ENCODE measurements at regions of chr19 and their contacts with region 1.

Region 1: DNA sequence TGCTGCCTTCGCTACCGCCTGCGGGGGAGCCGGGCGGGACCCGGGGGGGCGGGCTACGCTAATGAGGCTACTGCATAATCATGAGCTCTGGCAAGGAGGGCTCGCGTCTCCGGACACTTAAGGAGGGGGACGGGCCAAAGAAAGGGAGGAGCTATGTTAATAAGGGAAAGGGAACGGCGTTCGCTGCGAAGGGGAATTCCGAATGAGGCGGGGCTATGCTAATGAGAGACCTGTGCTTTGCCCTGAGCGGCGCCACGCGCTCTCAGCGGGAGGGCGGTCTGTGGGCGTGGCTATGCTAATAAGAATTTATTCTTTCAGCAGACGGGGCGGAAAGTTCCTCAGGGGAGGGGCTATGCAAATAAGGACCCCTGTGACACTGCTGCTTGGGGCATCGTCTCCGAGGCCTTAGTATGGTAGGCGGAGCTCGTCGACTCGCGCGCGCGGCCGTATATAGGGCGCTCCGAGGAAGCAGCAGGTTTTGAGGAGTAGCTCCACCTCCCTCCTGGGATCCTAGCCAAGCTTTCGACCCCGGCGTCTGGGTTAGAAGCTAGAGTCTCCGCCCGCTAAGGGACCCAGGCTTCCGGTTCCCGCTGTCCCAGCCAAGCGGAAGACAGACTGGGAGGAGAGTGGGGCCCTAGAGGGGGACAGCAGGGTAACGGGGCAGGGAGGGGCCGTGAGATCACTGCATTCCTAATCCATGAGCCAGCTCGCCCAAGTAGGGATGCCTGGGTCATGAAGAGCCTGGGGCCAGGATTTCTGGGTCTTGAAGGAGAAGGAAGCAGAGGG is at the start of gene RRAS:
- DNase-seq: peak; percentile 91 to 100 (median 99)
- ATAC-seq: peak; percentile 78
- H3K4me3 ChIP-seq: peak within 1 kb of the TSS; percentile 64
- H3K4me3 Mint-ChIP-seq: peak within 1 kb of the TSS; percentile 86 to 98 (median 93)
- H3K27ac ChIP-seq: peak within 1 kb of the TSS; percentile 95
- H3K27ac Mint-ChIP-seq: peak within 1 kb of the TSS; percentile 93 to 99 (median 99)
- H3K4me1 ChIP-seq: peaks cover 27 to 40% of the 10 kb centered on the region in 2 donors
- H3K4me1 Mint-ChIP-seq: peaks cover 57 to 67% (median 63%) of the 10 kb centered on the region in 7 donors
- H3K27me3 ChIP-seq: no peaks in the 10 kb centered on the region
- H3K27me3 Mint-ChIP-seq: peaks cover 0 to 6% (median 0%) of the 10 kb centered on the region in 5 donors
- total RNA-seq, gene RRAS: 11.0 to 18.6 (median 13.8) TPM

Region 2: DNA sequence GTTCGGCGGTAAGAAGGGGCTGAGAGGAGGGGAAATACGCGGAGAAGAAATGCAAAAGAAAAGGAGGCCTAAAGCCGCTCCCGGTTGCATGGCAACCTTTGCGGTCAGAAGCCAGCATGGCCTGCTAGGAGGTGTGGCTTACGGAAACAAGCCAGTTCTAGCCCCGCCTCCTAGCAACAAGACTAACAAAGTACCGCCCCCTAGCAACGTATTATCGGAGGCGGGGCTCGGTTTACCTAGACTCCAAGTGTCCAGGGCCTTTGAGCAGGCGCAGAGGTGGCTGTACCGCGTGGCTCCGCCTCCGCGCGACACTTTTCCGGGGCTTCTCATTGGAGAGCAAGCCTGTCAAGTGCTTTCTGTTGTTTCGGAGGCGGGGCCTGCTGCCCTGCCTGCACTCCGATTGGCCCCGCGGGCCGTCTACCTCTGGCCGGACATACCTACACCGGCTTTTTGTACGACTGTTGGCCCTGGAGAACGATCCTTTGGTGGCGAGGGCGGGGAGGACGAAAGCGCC is 1171.5 kb before region 1 on chr19:
- CTCF ChIA-PET with region 1: no interaction called
- POLR2A ChIA-PET with region 1: no interaction called
- intact Hi-C with region 1: loop called in 1 of 2 experiments (anchors 5 kb)
- DNase-seq: peak; percentile 93 to 100 (median 100)
- ATAC-seq: peak; percentile 93
- H3K4me3 ChIP-seq: peak overlapping the region; percentile 93
- H3K4me3 Mint-ChIP-seq: peak overlapping the region; percentile 81 to 96 (median 92)
- H3K27ac ChIP-seq: peak overlapping the region; percentile 86
- H3K27ac Mint-ChIP-seq: peak overlapping the region; percentile 85 to 96 (median 90)
- H3K4me1 ChIP-seq: peaks cover 7 to 15% of the 10 kb centered on the region in 2 donors
- H3K4me1 Mint-ChIP-seq: peaks cover 0 to 30% (median 18%) of the 10 kb centered on the region in 7 donors
- H3K27me3 ChIP-seq: no peaks in the 10 kb centered on the region
- H3K27me3 Mint-ChIP-seq: no peaks in the 10 kb centered on the region

Region 3: DNA sequence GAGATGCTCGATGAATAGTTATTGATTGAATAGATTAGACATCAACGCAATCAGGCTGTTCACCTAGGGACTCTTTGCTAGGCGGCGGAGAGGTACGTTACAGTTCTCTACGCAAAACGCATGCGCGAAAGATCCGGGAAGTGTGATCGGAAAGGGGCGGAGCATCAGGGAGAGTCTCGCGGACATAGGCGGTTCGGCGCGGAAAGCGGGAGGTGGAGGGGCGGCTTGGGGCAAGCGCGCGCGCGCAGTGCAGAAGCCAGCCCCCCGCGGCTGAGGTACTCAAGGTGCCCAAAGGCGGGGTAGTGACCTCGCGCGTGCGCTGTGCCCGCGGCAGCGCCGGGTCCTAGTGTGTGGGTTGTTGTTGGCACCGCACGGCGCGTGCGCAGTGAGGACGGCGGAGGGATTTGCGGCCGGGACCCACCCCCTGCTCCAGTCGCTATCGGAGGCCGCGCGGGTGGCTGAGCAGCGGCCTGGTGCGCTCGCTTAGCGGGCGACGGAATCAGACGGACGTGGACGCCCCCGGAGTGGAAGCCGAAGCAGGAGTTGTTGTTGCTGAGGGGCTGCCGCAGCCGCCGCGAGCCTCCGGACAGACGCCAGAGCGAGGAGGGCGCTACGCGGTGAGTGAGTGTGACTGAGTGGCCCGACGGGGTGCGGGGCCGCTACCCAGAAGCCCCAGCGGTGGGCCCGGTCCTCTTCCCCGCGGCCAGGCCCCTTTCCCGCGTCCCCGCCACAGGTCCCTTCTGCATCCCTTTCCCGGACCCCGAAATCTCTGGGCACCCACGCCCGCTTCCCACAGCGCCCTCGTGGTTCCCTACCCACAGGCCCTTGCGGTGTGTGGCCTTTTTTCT is 555.1 kb before region 1 on chr19 and contains the start of gene SNRNP70:
- CTCF ChIA-PET with region 1: no interaction called
- POLR2A ChIA-PET with region 1: no interaction called
- intact Hi-C with region 1: no loop called
- DNase-seq: peak; percentile 99 to 100 (median 100)
- ATAC-seq: peak; percentile 97
- H3K4me3 ChIP-seq: peak within 1 kb of the TSS; percentile 72
- H3K4me3 Mint-ChIP-seq: peak within 1 kb of the TSS; percentile 71 to 97 (median 94)
- H3K27ac ChIP-seq: peak within 1 kb of the TSS; percentile 94
- H3K27ac Mint-ChIP-seq: peak within 1 kb of the TSS; percentile 83 to 96 (median 88)
- H3K4me1 ChIP-seq: peaks cover 19% of the 10 kb centered on the region in 2 donors
- H3K4me1 Mint-ChIP-seq: peaks cover 18 to 49% (median 35%) of the 10 kb centered on the region in 7 donors
- H3K27me3 ChIP-seq: no peaks in the 10 kb centered on the region
- H3K27me3 Mint-ChIP-seq: peaks cover 0 to 5% (median 4%) of the 10 kb centered on the region in 5 donors
- total RNA-seq, gene SNRNP70: 243 to 837 (median 449) TPM

Region 4: GRCh38 chr19:49451430-49452181 is 188.7 kb before region 1 on chr19 and contains the start of gene PIH1D1:
- CTCF ChIA-PET with region 1: no interaction called
- POLR2A ChIA-PET with region 1: interaction called, 3 read pairs
- intact Hi-C with region 1: loop called in 1 of 2 experiments (anchors 1 kb)
- DNase-seq: peak; percentile 69 to 97 (median 94)
- ATAC-seq: peak; percentile 71
- H3K4me3 ChIP-seq: peak within 1 kb of the TSS; percentile 85
- H3K4me3 Mint-ChIP-seq: peak within 1 kb of the TSS; percentile 95 to 100 (median 99)
- H3K27ac ChIP-seq: peak within 1 kb of the TSS; percentile 95
- H3K27ac Mint-ChIP-seq: peak within 1 kb of the TSS; percentile 92 to 100 (median 99)
- H3K4me1 ChIP-seq: peaks cover 15 to 26% of the 10 kb centered on the region in 2 donors
- H3K4me1 Mint-ChIP-seq: peaks cover 31 to 68% (median 55%) of the 10 kb centered on the region in 7 donors
- H3K27me3 ChIP-seq: no peaks in the 10 kb centered on the region
- H3K27me3 Mint-ChIP-seq: no peaks in the 10 kb centered on the region
- total RNA-seq, gene PIH1D1: 136 to 183 (median 159) TPM

Region 5: DNA sequence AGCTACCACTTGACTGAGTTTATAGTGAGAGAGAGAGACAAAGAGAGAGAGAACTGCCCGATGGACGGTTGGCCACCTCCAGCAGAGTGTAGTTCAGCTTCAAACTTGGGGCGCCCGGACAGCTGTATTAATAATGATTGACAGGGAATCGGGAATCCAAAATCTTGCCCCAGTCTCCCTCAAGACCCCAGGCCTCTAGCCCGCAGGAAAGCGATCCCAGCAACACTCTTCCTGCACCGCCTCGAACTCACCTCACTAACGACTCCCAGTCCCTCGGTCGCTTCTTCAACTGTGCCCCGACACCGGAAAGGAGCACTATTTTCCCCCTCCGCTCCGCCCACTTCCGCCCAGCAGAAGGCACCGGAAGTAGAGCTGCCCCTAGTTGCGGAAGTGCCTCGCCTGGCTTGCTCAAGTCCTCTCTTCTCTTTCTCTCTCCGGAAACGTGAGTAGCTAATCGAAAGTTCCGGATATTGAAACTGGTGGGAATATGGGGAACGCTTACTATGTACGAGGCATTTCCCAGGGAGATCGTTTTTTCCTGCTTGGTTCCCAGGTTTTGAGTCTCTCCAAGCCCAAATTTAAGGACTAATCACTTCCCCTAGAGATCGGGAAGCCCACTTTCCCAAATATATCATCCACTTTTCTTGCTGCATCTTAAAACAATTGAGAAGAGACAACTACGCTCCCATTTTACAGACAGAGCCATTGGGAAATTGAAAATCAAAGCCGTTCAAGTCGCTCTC is 59.9 kb before region 1 on chr19 and contains the start of gene NOSIP:
- CTCF ChIA-PET with region 1: no interaction called
- POLR2A ChIA-PET with region 1: interaction called, 34 read pairs
- intact Hi-C with region 1: loop called (anchors 1 kb)
- DNase-seq: peak; percentile 88 to 96 (median 94)
- ATAC-seq: peak; percentile 100
- H3K4me3 ChIP-seq: peak within 1 kb of the TSS; percentile 68
- H3K4me3 Mint-ChIP-seq: peak within 1 kb of the TSS; percentile 91 to 98 (median 94)
- H3K27ac ChIP-seq: peak within 1 kb of the TSS; percentile 84
- H3K27ac Mint-ChIP-seq: peak within 1 kb of the TSS; percentile 85 to 98 (median 92)
- H3K4me1 ChIP-seq: peaks cover 0 to 22% of the 10 kb centered on the region in 2 donors
- H3K4me1 Mint-ChIP-seq: peaks cover 20 to 49% (median 36%) of the 10 kb centered on the region in 7 donors
- H3K27me3 ChIP-seq: no peaks in the 10 kb centered on the region
- H3K27me3 Mint-ChIP-seq: no peaks in the 10 kb centered on the region
- total RNA-seq, gene NOSIP: 222 to 267 (median 228) TPM

Region 6: GRCh38 chr19:49766007-49766937 is 126.0 kb after region 1 on chr19:
- CTCF ChIA-PET with region 1: no interaction called
- POLR2A ChIA-PET with region 1: interaction called, 5 read pairs
- intact Hi-C with region 1: loop called (anchors 1 kb)
- DNase-seq: peak; percentile 86 to 100 (median 99)
- ATAC-seq: peak; percentile 92
- H3K4me3 ChIP-seq: peak overlapping the region; percentile 79
- H3K4me3 Mint-ChIP-seq: peak overlapping the region; percentile 89 to 98 (median 96)
- H3K27ac ChIP-seq: peak overlapping the region; percentile 80
- H3K27ac Mint-ChIP-seq: peak overlapping the region; percentile 84 to 98 (median 96)
- H3K4me1 ChIP-seq: peaks cover 11 to 16% of the 10 kb centered on the region in 2 donors
- H3K4me1 Mint-ChIP-seq: peaks cover 15 to 43% (median 36%) of the 10 kb centered on the region in 7 donors
- H3K27me3 ChIP-seq: no peaks in the 10 kb centered on the region
- H3K27me3 Mint-ChIP-seq: no peaks in the 10 kb centered on the region

Region 7: GRCh38 chr19:49869441-49870176 is 229.3 kb after region 1 on chr19:
- CTCF ChIA-PET with region 1: interaction called, 3 read pairs
- POLR2A ChIA-PET with region 1: no interaction called
- intact Hi-C with region 1: loop called in 1 of 2 experiments (anchors 2 kb)
- DNase-seq: peak; percentile 83 to 94 (median 87)
- ATAC-seq: peak; percentile 87
- H3K4me3 ChIP-seq: peak overlapping the region; percentile 58
- H3K4me3 Mint-ChIP-seq: peak overlapping the region in 2 of 10 donors; percentile 87
- H3K27ac ChIP-seq: peak overlapping the region; percentile 72
- H3K27ac Mint-ChIP-seq: peak overlapping the region in 5 of 9 donors; percentile 59 to 87 (median 74)
- H3K4me1 ChIP-seq: peaks cover 31 to 38% of the 10 kb centered on the region in 2 donors
- H3K4me1 Mint-ChIP-seq: peaks cover 25 to 51% (median 45%) of the 10 kb centered on the region in 7 donors
- H3K27me3 ChIP-seq: no peaks in the 10 kb centered on the region
- H3K27me3 Mint-ChIP-seq: no peaks in the 10 kb centered on the region

Measured in naive thymus-derived CD4-positive, alpha-beta T cell (primary cell).